ENCODE measurements at regions of chr10 and their contacts with region 1.

Region 1: DNA sequence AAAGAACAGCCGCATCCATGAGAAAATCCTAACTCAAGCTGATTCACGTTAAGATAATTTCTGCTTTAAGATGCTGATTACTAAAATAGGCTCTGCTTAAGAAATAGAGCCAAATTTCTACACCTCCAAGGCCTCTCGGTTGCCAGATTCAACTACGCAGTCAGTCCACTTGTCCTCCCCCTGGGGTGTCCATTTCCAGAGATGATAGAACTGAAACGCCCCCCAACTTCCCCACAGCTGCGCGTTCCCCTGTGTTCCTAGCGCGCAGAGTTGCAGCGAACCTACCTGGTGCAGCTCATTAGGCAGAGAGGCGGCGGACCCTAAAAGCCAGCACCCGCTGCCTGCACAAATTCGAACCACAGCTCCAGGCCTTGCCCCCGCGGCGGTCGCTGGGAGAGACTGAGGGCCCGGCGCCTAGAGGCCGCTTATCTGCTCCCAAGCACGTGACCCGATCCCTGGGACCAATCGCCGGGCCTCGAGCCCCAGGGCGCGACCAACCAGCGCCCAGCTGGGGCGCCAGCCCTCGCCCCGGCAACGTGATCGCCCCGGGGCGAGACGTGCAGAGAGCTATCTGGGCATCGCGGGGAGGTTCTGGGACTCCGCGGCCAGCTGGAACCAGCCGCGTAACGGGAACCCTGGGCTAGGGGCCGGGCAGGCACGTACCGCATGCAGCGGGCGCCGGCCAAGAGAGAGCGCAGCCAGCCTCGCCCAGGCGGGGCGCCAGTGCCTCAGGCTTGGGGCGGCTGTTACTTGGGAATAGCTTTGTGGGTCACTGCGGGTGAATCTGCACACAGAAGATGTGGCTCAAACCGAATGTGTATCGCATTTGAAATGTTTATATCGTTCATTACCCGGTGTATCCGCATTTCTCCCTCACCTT is at the start of gene PPP1R3C:
- DNase-seq: peak; percentile 84
- H3K4me3 ChIP-seq: peak within 1 kb of the TSS; percentile 4 to 54 (median 51)
- H3K27ac ChIP-seq: no peak within 1 kb of the TSS
- H3K4me1 ChIP-seq: peaks cover 13% of the 10 kb centered on the region
- H3K27me3 ChIP-seq: peaks cover 2 to 3% of the 10 kb centered on the region in 2 experiments
- CTCF ChIP-seq: peak; percentile 6 to 37
- POLR2A ChIP-seq: peak; percentile 71
- total RNA-seq, gene PPP1R3C: 0.74 and 1.6 TPM in 2 replicates

Region 2: GRCh38 chr10:91381257-91381891 is 251.5 kb before region 1 on chr10:
- CTCF ChIA-PET with region 1: interaction called, 32 read pairs
- POLR2A ChIA-PET with region 1: no interaction called
- dilution Hi-C with region 1: no loop called
- intact Hi-C with region 1: no loop called
- DNase-seq: no peak
- H3K4me3 ChIP-seq: no peak overlapping the region
- H3K27ac ChIP-seq: no peak overlapping the region
- H3K4me1 ChIP-seq: peaks cover 3% of the 10 kb centered on the region
- H3K27me3 ChIP-seq: peaks cover 13 to 35% of the 10 kb centered on the region in 2 experiments
- CTCF ChIP-seq: no peak
- POLR2A ChIP-seq: no peak

Region 3: GRCh38 chr10:91493313-91493712 is 139.6 kb before region 1 on chr10:
- CTCF ChIA-PET with region 1: interaction called, 188 read pairs
- POLR2A ChIA-PET with region 1: no interaction called
- dilution Hi-C with region 1: no loop called
- intact Hi-C with region 1: loop called (anchors 1 kb)
- DNase-seq: peak; percentile 24
- H3K4me3 ChIP-seq: no peak overlapping the region
- H3K27ac ChIP-seq: no peak overlapping the region
- H3K4me1 ChIP-seq: no peaks in the 10 kb centered on the region
- H3K27me3 ChIP-seq: no peaks in the 10 kb centered on the region
- CTCF ChIP-seq: no peak
- POLR2A ChIP-seq: no peak

Region 4: GRCh38 chr10:91564508-91564907 is 68.4 kb before region 1 on chr10:
- CTCF ChIA-PET with region 1: interaction called, 25 read pairs
- POLR2A ChIA-PET with region 1: no interaction called
- dilution Hi-C with region 1: no loop called
- intact Hi-C with region 1: no loop called
- DNase-seq: no peak
- H3K4me3 ChIP-seq: no peak overlapping the region
- H3K27ac ChIP-seq: no peak overlapping the region
- H3K4me1 ChIP-seq: no peaks in the 10 kb centered on the region
- H3K27me3 ChIP-seq: peaks cover 7% of the 10 kb centered on the region in 2 experiments
- CTCF ChIP-seq: no peak
- POLR2A ChIP-seq: no peak

Region 5: DNA sequence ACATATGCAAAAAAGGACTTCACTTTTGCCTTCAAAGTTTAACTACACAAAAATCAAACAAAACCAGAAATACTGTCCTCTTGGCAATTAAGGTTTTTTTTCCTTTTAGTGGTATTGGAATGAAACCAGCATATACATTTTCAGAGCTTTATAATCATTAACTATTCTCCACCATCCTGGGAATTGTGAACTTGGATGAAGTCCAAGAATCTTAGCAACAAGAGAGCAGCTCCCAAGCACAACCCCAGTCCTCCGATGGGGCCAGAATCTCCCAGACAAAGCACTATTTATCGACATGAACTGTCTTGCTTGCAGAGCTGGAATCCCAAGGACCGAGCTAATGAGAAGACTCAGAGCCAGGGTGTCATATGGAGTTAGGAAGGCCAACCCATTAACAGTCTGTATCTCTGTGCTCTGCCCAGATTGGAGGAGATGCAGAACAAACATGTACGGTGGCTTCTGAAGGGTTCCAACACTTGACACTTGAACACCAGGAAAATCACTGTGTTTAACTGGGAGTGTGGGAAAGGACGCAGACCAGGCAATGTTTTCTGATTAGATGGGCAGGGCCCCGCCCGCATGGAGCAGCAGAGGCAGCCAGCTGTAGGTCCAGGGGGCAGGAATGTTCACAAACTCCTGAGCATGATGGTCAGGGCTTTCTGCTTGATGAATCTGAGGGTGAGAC is 35.6 kb before region 1 on chr10:
- CTCF ChIA-PET with region 1: interaction called, 10 read pairs
- POLR2A ChIA-PET with region 1: no interaction called
- dilution Hi-C with region 1: no loop called
- intact Hi-C with region 1: no loop called
- DNase-seq: no peak
- H3K4me3 ChIP-seq: peak overlapping the region in 1 of 3 experiments; percentile 8
- H3K27ac ChIP-seq: peak overlapping the region; percentile 74
- H3K4me1 ChIP-seq: peaks cover 28% of the 10 kb centered on the region
- H3K27me3 ChIP-seq: no peaks in the 10 kb centered on the region
- CTCF ChIP-seq: no peak
- POLR2A ChIP-seq: no peak

Region 6: GRCh38 chr10:91621483-91622113 is 11.3 kb before region 1 on chr10:
- CTCF ChIA-PET with region 1: interaction called, 13 read pairs
- POLR2A ChIA-PET with region 1: no interaction called
- dilution Hi-C with region 1: no loop called
- intact Hi-C with region 1: no loop called
- DNase-seq: no peak
- H3K4me3 ChIP-seq: no peak overlapping the region
- H3K27ac ChIP-seq: no peak overlapping the region
- H3K4me1 ChIP-seq: peaks cover 4% of the 10 kb centered on the region
- H3K27me3 ChIP-seq: no peaks in the 10 kb centered on the region
- CTCF ChIP-seq: no peak
- POLR2A ChIP-seq: no peak

Region 7: DNA sequence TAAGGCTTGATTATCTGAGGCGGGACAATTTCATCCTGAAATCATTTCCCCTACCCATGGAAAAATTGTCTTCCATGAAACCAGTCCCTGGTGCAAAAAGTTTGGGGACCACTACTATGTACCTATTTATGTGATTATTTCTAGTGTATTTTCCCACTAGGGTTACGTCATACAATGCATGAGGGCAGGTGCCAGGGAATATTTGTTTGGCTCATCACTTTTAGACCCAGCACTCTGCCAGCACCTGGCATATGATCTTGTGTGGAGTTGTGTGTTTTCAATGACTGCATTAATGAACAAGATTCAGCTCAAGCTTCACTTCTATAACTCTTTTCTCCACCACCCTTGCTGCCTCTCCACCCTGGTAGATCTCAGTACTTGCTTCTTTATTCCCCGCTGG is 92.0 kb after region 1 on chr10:
- CTCF ChIA-PET with region 1: no interaction called
- POLR2A ChIA-PET with region 1: no interaction called
- dilution Hi-C with region 1: no loop called
- intact Hi-C with region 1: no loop called
- DNase-seq: no peak
- H3K4me3 ChIP-seq: no peak overlapping the region
- H3K27ac ChIP-seq: no peak overlapping the region
- H3K4me1 ChIP-seq: no peaks in the 10 kb centered on the region
- H3K27me3 ChIP-seq: peaks cover 22 to 33% of the 10 kb centered on the region in 2 experiments
- CTCF ChIP-seq: no peak
- POLR2A ChIP-seq: no peak

Region 8: GRCh38 chr10:91908337-91909116 is 275.6 kb after region 1 on chr10:
- CTCF ChIA-PET with region 1: interaction called, 18 read pairs
- POLR2A ChIA-PET with region 1: no interaction called
- dilution Hi-C with region 1: no loop called
- intact Hi-C with region 1: loop called (anchors 2 kb)
- DNase-seq: peak; percentile 81
- H3K4me3 ChIP-seq: peak overlapping the region; percentile 57 to 71 (median 63)
- H3K27ac ChIP-seq: no peak overlapping the region
- H3K4me1 ChIP-seq: peaks cover 18% of the 10 kb centered on the region
- H3K27me3 ChIP-seq: peaks cover 3% of the 10 kb centered on the region in 2 experiments
- CTCF ChIP-seq: peak; percentile 37 to 51
- POLR2A ChIP-seq: no peak

Region 9: GRCh38 chr10:93062514-93063143 is 1429.7 kb after region 1 on chr10:
- CTCF ChIA-PET with region 1: no interaction called
- POLR2A ChIA-PET with region 1: no interaction called
- dilution Hi-C with region 1: no loop called
- intact Hi-C with region 1: no loop called
- DNase-seq: no peak
- H3K4me3 ChIP-seq: no peak overlapping the region
- H3K27ac ChIP-seq: no peak overlapping the region
- H3K4me1 ChIP-seq: peaks cover 4% of the 10 kb centered on the region
- H3K27me3 ChIP-seq: no peaks in the 10 kb centered on the region
- CTCF ChIP-seq: peak; percentile 56 to 67
- POLR2A ChIP-seq: no peak